ENCODE measurements at regions of chr2 and their contacts with region 1.

Region 1: DNA sequence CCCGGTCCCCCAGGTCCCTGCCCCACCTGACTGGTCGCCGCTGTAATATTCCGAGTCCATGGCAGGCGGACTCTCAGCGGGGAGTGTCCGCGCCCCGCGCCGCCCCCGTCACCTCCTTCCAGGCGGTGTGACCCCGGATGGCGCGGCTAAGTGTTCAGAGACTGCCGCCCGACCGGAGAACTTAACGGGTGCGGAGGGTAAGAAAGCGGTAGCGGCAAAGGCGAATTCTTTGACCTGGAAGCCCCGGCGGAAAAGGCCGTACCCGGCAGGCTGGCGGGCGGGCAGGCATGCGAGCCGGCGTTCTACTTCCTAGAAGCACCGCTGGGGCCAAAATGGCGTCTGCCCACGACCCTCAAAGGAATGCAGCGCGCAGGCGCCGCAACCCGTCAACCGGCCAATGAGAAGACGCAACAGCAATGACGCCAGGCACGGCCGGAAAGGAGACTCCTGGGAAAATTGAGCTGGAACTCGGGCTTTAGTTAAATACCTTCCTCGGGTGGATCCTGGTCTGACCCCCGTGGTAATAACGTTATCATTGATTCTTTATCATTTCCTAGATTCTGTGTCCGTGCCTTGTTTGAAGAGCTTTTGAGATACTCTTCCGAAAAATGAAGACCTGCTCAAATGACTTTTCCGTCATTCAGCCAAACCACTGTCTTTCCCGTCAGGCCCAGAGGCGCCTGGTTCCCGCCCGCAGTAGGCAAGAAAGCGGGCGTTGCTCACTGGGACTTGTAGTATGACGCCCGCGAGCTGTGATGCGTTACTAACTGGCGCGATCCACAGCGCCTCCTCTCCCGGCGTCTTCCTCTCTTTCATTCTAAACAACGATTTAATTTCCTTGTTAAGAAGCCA is at the start of gene IWS1:
- DNase-seq: peak; percentile 96
- ATAC-seq: peak; percentile 94
- H3K4me3 Mint-ChIP-seq: peak within 1 kb of the TSS; percentile 98
- H3K27ac Mint-ChIP-seq: peak within 1 kb of the TSS; percentile 98
- H3K4me1 Mint-ChIP-seq: peaks cover 29% of the 10 kb centered on the region
- H3K27me3 Mint-ChIP-seq: no peaks in the 10 kb centered on the region
- total RNA-seq, gene IWS1: 49.5 to 55.0 TPM

Region 2: GRCh38 chr2:126657636-126658318 is 868.6 kb before region 1 on chr2:
- CTCF ChIA-PET with region 1: no interaction called
- POLR2A ChIA-PET with region 1: no interaction called
- intact Hi-C with region 1: loop called in 1 of 2 experiments (anchors 5 kb)
- DNase-seq: peak; percentile 87
- ATAC-seq: peak; percentile 67
- H3K4me3 Mint-ChIP-seq: peak overlapping the region; percentile 97
- H3K27ac Mint-ChIP-seq: peak overlapping the region; percentile 99
- H3K4me1 Mint-ChIP-seq: peaks cover 59% of the 10 kb centered on the region
- H3K27me3 Mint-ChIP-seq: no peaks in the 10 kb centered on the region

Region 3: DNA sequence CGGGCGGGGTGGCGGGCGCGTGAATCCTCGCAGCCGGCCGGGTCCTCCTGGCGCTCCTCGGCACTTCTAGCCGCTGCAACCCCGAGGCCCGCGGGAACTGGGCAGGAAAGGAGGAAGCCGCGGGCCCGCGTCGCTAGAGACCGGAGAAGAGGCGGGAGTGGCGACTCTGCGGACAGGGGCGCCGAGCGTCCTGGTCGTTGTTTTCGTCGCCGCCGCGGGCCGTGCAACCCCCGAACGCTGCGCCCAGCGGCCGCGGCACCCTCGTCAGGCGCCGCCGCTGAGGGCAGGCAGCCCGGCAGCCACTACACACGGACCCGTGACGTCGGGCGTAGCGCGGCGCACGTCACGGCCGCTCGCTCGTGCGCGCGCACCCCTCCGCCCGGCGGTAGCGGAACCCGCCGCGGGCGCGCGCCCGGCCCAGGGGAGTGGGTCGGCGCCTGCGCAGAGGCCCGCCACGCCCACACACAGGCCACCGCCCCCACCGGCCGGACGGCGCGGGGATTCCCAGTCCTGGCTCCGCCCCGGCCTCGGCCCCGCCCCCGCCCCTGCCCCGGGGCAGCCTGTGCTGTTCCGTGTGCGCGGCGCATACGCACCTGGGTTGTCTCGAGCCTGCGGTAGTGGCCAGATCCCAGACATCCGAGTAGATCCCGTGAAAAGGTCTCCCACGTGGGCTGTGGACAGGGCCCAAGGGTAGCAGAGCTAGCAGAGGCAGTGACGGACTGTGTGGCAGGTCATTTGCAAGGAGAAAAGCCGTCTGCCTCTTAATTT is 138.5 kb before region 1 on chr2 and contains the start of gene MAP3K2:
- CTCF ChIA-PET with region 1: no interaction called
- POLR2A ChIA-PET with region 1: no interaction called
- intact Hi-C with region 1: loop called (anchors 1 kb)
- DNase-seq: peak; percentile 96
- ATAC-seq: peak; percentile 73
- H3K4me3 Mint-ChIP-seq: peak within 1 kb of the TSS; percentile 83
- H3K27ac Mint-ChIP-seq: peak within 1 kb of the TSS; percentile 93
- H3K4me1 Mint-ChIP-seq: peaks cover 72% of the 10 kb centered on the region
- H3K27me3 Mint-ChIP-seq: no peaks in the 10 kb centered on the region
- total RNA-seq, gene MAP3K2: 35.2 to 35.6 TPM

Region 4: GRCh38 chr2:127563458-127564428 is 37.4 kb after region 1 on chr2:
- CTCF ChIA-PET with region 1: interaction called, 3 read pairs
- POLR2A ChIA-PET with region 1: interaction called, 5 read pairs
- intact Hi-C with region 1: loop called (anchors 1 kb)
- DNase-seq: peak; percentile 48
- ATAC-seq: peak; percentile 94
- H3K4me3 Mint-ChIP-seq: no peak overlapping the region
- H3K27ac Mint-ChIP-seq: peak overlapping the region; percentile 61
- H3K4me1 Mint-ChIP-seq: peaks cover 18% of the 10 kb centered on the region
- H3K27me3 Mint-ChIP-seq: peaks cover 3% of the 10 kb centered on the region

Region 5: GRCh38 chr2:127701193-127701650 is 174.8 kb after region 1 on chr2 and contains the start of gene SFT2D3:
- CTCF ChIA-PET with region 1: no interaction called
- POLR2A ChIA-PET with region 1: no interaction called
- intact Hi-C with region 1: loop called (anchors 1 kb)
- DNase-seq: peak; percentile 95
- ATAC-seq: peak; percentile 87
- H3K4me3 Mint-ChIP-seq: peak within 1 kb of the TSS; percentile 88
- H3K27ac Mint-ChIP-seq: peak within 1 kb of the TSS; percentile 95
- H3K4me1 Mint-ChIP-seq: peaks cover 34% of the 10 kb centered on the region
- H3K27me3 Mint-ChIP-seq: no peaks in the 10 kb centered on the region
- total RNA-seq, gene SFT2D3: 2.8 to 3.1 TPM

Region 6: GRCh38 chr2:127884436-127885345 is 358.3 kb after region 1 on chr2:
- CTCF ChIA-PET with region 1: no interaction called
- POLR2A ChIA-PET with region 1: no interaction called
- intact Hi-C with region 1: loop called in 1 of 2 experiments (anchors 10 kb)
- DNase-seq: no peak
- ATAC-seq: no peak
- H3K4me3 Mint-ChIP-seq: peak overlapping the region; percentile 88
- H3K27ac Mint-ChIP-seq: peak overlapping the region; percentile 85
- H3K4me1 Mint-ChIP-seq: peaks cover 57% of the 10 kb centered on the region
- H3K27me3 Mint-ChIP-seq: no peaks in the 10 kb centered on the region

Region 7: DNA sequence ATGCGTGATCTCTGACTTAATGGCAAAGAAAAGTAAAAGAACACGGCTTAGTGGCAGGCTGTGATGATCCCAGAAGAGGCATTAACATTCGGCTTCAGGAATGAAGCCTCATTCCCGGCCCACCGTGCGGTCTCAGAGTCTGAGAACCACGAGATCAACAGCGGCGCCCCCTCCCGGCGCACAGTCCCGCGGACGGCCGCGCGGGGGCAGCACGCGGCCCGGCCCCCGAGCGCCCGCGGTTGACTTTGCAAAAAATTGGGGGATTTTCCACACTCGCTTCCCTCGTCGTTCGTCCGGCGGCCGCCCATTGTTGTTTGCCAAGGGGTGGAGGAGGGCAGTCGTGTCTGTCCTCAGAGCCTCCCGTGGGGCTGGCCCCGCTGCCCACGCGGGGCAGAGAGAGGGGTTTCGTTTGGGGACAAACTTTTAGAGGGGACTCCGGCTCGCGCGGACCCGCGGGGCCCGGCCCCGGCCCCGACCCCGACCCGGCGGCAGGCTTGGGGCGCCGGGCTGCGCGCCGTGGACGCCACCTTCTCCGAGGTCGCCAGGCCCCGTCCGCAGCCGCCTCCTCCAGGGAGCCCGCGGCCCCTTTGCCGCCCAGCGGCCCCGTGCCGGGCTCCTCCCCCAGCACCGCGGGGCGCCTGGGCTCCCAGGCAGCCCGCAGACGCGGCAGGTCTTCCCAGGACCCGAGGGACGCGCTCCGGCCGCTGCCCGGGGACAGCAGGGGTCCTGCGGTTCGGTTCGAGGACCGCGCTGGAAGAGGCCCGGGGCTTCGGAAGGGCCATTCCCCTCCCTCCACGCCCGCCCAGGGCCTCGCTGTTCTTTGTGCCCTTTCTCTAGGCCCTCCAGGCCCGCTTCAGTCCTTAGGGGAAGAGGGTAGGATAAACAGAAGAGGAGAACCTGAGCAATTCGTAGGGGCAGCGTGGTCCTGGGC is 795.7 kb after region 1 on chr2:
- CTCF ChIA-PET with region 1: no interaction called
- POLR2A ChIA-PET with region 1: no interaction called
- intact Hi-C with region 1: loop called in 1 of 2 experiments (anchors 10 kb)
- DNase-seq: peak; percentile 89
- ATAC-seq: peak; percentile 52
- H3K4me3 Mint-ChIP-seq: peak overlapping the region; percentile 51
- H3K27ac Mint-ChIP-seq: peak overlapping the region; percentile 60
- H3K4me1 Mint-ChIP-seq: peaks cover 6% of the 10 kb centered on the region
- H3K27me3 Mint-ChIP-seq: no peaks in the 10 kb centered on the region